Psoas muscle (tissue), 8 donors: ENCODE measurements at regions of chr14 and their contacts with region 1.

Region 1: DNA sequence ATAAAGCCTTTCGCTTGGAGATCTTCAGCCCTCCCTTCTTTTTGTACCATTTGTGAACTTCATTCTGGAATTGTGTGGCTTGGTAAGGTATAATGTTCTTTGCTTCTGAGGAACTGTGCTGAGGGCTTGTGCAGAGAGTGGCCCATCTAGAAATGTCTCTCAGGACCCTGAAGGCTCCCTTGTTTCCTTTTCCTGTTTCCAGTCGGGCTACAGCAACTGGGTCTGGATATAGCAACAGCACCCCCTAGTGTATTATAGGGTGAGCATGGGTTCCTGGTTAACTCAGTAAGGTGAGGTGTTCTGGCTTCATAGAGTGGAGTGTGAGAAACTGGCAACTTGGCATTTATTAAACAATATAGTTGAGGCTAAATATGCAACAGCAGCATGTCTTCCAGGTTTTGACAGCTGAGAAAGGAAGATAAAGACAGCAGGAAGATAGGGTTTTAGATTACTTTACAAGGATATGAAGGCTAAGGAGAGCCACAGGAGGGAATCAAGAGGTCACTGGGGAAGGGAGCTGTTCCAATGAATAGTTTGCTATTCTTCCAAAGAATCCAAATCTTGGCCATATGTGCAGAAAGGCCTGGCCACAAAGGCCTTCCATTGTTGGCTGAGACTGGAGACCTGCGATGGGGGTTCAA is 49.1 kb upstream of the RNU6-8 start:
- DNase-seq: no peak
- ATAC-seq: peak; percentile 84 to 93 (median 90)
- H3K4me3 ChIP-seq: no peak overlapping the region
- H3K27ac ChIP-seq: peak overlapping the region; percentile 24
- H3K4me1 ChIP-seq: peaks cover 5% of the 10 kb centered on the region
- H3K27me3 ChIP-seq: no peaks in the 10 kb centered on the region
- CTCF ChIP-seq: peak; percentile 80

Region 2: DNA sequence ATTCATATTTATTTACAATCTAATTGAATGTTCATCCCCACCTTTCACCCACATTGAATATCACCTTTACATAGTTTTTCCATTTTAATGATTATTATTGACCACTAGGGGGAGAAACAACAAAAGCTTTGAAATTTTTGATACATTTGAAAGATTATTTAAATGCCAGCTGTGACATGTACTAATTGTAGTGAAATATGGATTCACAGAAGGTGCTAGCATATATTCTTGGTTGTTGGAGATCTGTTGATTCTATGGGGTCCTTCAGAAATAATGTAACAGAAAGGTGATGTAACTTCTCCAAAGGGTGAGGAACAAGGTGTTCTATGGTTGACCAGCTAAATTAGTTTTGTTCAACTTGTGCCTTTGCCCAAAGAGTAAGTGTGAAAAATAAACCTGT is 741.9 kb before region 1 on chr14:
- intact Hi-C with region 1: loop called (anchors 2 to 5 kb)
- DNase-seq: no peak
- ATAC-seq: no peak
- H3K4me3 ChIP-seq: no peak overlapping the region
- H3K27ac ChIP-seq: no peak overlapping the region
- H3K4me1 ChIP-seq: no peaks in the 10 kb centered on the region
- H3K27me3 ChIP-seq: no peaks in the 10 kb centered on the region
- CTCF ChIP-seq: peak; percentile 70

Region 3: DNA sequence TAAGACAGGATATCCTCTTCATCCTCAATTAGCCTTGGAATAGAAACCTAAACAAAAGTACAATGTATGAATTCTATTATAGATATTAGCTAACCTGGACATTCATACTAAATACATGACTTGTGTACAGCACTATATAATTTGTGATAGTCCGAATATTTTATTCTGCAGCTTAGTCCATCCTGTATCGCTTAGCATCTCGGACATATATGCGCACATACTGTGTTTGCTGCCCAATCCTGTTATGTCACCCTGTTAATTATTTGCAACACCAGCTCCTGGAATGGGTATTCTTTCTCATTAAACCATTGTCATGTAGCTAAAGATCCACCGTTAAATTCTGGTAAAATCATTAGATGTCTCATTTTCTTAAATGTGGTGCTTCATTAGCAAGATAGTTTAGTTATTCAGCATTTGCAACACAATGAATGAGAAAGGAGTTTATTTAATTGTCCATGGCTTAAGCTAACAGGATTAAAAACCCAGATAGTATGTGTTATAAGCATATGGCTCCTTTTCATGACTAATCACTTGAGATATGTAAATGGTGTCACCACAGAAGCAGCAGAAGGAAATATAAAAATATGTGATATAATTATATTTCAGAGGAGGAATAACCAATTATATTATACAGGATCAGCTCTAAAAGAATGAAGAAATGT is 331.0 kb before region 1 on chr14:
- intact Hi-C with region 1: no loop called
- DNase-seq: no peak
- ATAC-seq: no peak
- H3K4me3 ChIP-seq: no peak overlapping the region
- H3K27ac ChIP-seq: no peak overlapping the region
- H3K4me1 ChIP-seq: peaks cover 7% of the 10 kb centered on the region
- H3K27me3 ChIP-seq: no peaks in the 10 kb centered on the region
- CTCF ChIP-seq: no peak

Region 4: GRCh38 chr14:31937721-31938346 is 314.3 kb before region 1 on chr14:
- intact Hi-C with region 1: loop called (anchors 2 to 10 kb)
- DNase-seq: peak; percentile 60 to 61
- ATAC-seq: peak; percentile 92 to 96 (median 94)
- H3K4me3 ChIP-seq: no peak overlapping the region
- H3K27ac ChIP-seq: no peak overlapping the region
- H3K4me1 ChIP-seq: peaks cover 14% of the 10 kb centered on the region
- H3K27me3 ChIP-seq: no peaks in the 10 kb centered on the region
- CTCF ChIP-seq: no peak

Region 5: DNA sequence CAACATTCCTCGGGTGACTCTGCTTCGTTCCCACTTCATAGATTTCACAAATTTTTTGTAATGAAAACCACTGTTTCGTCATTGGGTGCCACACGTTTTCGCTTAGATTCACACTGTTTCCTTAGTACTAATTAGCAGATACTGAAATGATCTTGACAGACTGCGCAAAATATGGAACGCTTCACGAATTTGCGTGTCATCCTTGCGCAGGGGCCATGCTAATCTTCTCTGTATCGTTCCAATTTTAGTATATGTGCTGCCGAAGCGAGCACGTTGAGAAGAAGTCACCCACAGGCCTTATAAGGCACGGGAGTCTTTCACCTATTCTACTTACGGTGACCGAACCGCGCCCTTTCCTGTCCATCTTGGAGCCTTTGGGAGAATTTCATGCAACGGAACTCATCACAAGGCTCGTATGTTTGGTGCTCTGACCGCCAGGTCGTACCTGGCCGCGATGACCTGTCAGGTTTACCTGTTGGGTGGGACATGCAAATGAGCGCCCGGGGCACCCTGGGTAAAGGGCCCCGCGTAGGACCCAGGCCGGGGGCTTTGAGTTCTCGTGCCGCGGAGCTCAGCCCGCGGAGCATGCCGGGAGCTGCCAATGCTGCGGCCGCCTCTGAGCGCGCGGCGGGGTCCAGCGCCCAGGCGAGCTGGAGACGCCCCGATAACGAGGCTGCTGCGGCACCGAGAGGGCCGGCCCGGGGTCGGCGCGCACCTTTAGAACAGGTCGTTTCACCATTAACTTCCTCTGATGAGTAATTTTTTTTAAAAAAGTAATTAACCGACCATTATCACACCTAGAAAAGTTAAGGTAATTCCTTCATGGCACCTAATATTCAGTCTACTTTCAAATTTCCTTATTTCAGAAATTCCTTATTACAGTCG is 48.9 kb before region 1 on chr14 and contains the start of gene RNU6-8:
- intact Hi-C with region 1: loop called in 1 of 2 experiments (anchors 5 kb)
- DNase-seq: peak; percentile 85 to 95
- ATAC-seq: peak; percentile 89 to 93 (median 92)
- H3K4me3 ChIP-seq: peak within 1 kb of the TSS; percentile 84
- H3K27ac ChIP-seq: peak within 1 kb of the TSS; percentile 89
- H3K4me1 ChIP-seq: peaks cover 5% of the 10 kb centered on the region
- H3K27me3 ChIP-seq: no peaks in the 10 kb centered on the region
- CTCF ChIP-seq: no peak
- total RNA-seq, gene RNU6-8: not detected

Region 6: GRCh38 chr14:32263939-32264567 is 11.9 kb after region 1 on chr14:
- intact Hi-C with region 1: no loop called
- DNase-seq: no peak
- ATAC-seq: no peak
- H3K4me3 ChIP-seq: no peak overlapping the region
- H3K27ac ChIP-seq: no peak overlapping the region
- H3K4me1 ChIP-seq: peaks cover 4% of the 10 kb centered on the region
- H3K27me3 ChIP-seq: no peaks in the 10 kb centered on the region
- CTCF ChIP-seq: no peak

Region 7: GRCh38 chr14:32286602-32287001 is 34.5 kb after region 1 on chr14:
- intact Hi-C with region 1: no loop called
- DNase-seq: no peak
- ATAC-seq: no peak
- H3K4me3 ChIP-seq: no peak overlapping the region
- H3K27ac ChIP-seq: no peak overlapping the region
- H3K4me1 ChIP-seq: no peaks in the 10 kb centered on the region
- H3K27me3 ChIP-seq: no peaks in the 10 kb centered on the region
- CTCF ChIP-seq: no peak

Region 8: GRCh38 chr14:32307881-32308582 is 55.9 kb after region 1 on chr14:
- intact Hi-C with region 1: no loop called
- DNase-seq: no peak
- ATAC-seq: no peak
- H3K4me3 ChIP-seq: no peak overlapping the region
- H3K27ac ChIP-seq: no peak overlapping the region
- H3K4me1 ChIP-seq: peaks cover 6% of the 10 kb centered on the region
- H3K27me3 ChIP-seq: no peaks in the 10 kb centered on the region
- CTCF ChIP-seq: no peak

Region 9: GRCh38 chr14:32560209-32560857 is 308.2 kb after region 1 on chr14:
- intact Hi-C with region 1: loop called in 1 of 2 experiments (anchors 5 kb)
- DNase-seq: peak in 1 of 2 donors; percentile 18
- ATAC-seq: peak; percentile 68 to 87 (median 82)
- H3K4me3 ChIP-seq: no peak overlapping the region
- H3K27ac ChIP-seq: peak overlapping the region; percentile 24
- H3K4me1 ChIP-seq: peaks cover 50% of the 10 kb centered on the region
- H3K27me3 ChIP-seq: no peaks in the 10 kb centered on the region
- CTCF ChIP-seq: peak; percentile 80